ENCODE measurements at regions of chr20 and their contacts with region 1.

Region 1: DNA sequence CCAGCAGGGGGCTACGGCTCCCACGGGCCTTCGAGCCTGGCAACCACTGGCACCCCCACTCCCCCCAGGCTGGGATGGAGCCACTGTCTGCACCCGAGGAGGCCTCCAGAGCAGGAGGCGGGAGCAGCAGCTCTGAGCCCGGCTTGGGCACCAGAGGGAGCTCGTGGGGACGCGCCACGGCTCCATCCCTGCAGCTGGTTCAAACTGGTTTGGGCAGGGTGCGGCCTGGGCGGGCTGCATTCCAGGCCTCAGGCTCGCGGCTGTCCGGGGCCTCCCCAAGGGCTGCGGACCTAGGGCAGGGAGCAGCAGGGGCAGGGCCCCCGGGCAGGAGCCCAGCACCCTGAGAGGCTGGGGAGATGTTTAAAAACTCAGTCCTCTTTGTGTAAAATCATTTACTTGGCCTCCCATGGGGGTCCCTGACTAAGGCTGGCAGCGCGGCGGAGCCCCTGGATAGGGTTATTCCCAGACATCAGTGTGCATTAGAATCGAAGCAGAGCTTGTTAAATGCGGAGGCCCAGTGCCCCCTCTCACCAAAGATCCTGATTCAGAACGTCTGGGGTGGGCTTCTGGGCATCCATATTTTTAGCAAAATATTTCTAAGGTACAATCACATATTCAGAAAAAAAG is 4.1 kb upstream of the BCAS4 start:
- DNase-seq: peak; percentile 51
- ATAC-seq: peak; percentile 83
- H3K4me3 ChIP-seq: no peak overlapping the region; the same call in 1 of the 2 replicates
- H3K27ac ChIP-seq: peak overlapping the region; percentile 65
- H3K4me1 ChIP-seq: peaks cover 10% of the 10 kb centered on the region
- H3K27me3 ChIP-seq: no peaks in the 10 kb centered on the region
- CTCF ChIP-seq: peak; percentile 81 to 95 (median 90)
- EP300 ChIP-seq: no peak
- POLR2A ChIP-seq: peak; percentile 94
- RAD21 ChIP-seq: peak; percentile 51

Region 2: GRCh38 chr20:50776122-50776817 is 14.5 kb before region 1 on chr20:
- CTCF ChIA-PET with region 1: interaction called, 10 read pairs
- POLR2A ChIA-PET with region 1: interaction called, 3 read pairs
- RAD21 ChIA-PET with region 1: interaction called, 3 read pairs
- SMC1A ChIA-PET with region 1: interaction called, 4 read pairs
- in situ Hi-C with region 1: no loop called
- intact Hi-C with region 1: no loop called
- DNase-seq: no peak
- ATAC-seq: no peak
- H3K4me3 ChIP-seq: no peak overlapping the region
- H3K27ac ChIP-seq: no peak overlapping the region
- H3K4me1 ChIP-seq: no peaks in the 10 kb centered on the region
- H3K27me3 ChIP-seq: no peaks in the 10 kb centered on the region; a peak in 1 of 4 replicates
- CTCF ChIP-seq: no peak
- EP300 ChIP-seq: no peak
- POLR2A ChIP-seq: no peak
- RAD21 ChIP-seq: no peak

Region 3: DNA sequence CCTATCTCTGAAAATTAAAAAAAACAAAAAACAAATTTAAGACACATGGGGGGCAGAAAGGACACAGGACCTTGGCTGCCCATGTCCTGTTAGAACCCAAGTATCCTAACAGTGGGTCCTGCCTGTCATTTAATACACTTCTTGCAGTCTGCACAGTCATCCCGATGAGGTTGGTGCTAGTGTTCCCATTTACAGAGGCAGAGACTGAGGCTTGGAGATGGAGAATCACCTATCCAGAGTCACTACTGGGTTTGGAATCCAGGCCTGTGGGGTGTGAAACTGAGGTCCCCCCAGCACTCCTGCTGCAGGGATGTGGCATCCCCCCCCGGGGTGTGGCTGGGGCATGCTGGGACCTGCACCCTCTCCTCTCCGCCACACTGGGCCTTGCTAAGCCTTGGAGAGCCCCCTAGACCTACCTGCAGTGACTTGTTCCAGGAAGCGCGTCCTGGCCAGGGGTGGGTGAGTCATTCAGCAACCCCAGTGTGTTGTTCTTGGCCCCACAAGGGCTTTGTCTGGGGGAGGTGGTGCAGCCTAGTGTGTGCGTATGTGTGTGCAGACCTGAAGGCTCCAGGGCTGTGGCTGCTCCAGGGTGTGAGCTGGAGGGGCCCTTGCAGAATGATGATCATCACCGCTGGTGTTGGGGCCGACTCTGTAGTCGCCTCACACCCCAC is 53.8 kb after region 1 on chr20:
- CTCF ChIA-PET with region 1: interaction called, 12 read pairs
- POLR2A ChIA-PET with region 1: interaction called, 8 read pairs
- RAD21 ChIA-PET with region 1: interaction called, 9 read pairs
- SMC1A ChIA-PET with region 1: interaction called, 12 read pairs
- in situ Hi-C with region 1: no loop called
- intact Hi-C with region 1: loop called (anchors 2 kb)
- DNase-seq: peak; percentile 83
- ATAC-seq: peak; percentile 96
- H3K4me3 ChIP-seq: no peak overlapping the region; the same call in 1 of the 2 replicates
- H3K27ac ChIP-seq: peak overlapping the region; percentile 96
- H3K4me1 ChIP-seq: peaks cover 50% of the 10 kb centered on the region
- H3K27me3 ChIP-seq: no peaks in the 10 kb centered on the region
- CTCF ChIP-seq: peak in 1 of 3 experiments; percentile 6; a peak in 1 of 6 replicates
- EP300 ChIP-seq: peak; percentile 76 to 83; a peak in 3 of 4 replicates
- POLR2A ChIP-seq: peak; percentile 73
- RAD21 ChIP-seq: peak; percentile 33

Region 4: DNA sequence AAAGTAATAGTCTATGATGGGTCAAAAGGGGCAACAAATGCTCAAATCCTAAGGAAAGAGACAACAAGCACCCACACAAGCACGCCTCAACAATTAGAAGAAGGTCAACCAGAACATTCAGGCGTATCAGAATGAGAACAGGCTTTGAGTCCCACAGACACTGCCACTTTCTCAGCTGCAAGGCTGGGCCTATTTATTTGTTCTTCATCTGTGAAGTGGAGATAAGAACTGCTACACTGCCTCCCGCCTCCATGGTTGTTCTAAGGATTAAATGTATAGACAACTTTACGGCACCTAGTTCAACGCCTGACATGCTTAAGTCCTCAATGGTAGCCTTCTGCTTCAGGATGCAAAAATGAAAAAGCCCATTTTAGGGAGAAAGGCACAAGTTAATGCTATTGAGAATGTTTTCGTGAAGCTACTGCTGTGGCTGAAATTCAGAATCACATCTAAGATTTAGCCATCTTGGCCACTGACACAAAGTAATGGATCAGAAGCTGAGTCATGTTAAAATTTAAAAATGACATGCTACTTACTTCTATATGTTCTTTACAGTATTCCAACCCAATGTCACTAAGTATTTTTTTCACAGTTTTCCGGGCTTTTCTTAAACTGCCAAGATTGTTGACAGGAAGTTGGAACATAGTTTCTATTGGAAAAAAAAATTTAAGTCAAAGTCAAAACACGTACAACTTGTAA is 112.7 kb after region 1 on chr20:
- CTCF ChIA-PET with region 1: interaction called, 22 read pairs
- POLR2A ChIA-PET with region 1: interaction called, 11 read pairs
- RAD21 ChIA-PET with region 1: interaction called, 5 read pairs
- SMC1A ChIA-PET with region 1: interaction called, 3 read pairs
- in situ Hi-C with region 1: no loop called
- intact Hi-C with region 1: no loop called
- DNase-seq: no peak
- ATAC-seq: no peak
- H3K4me3 ChIP-seq: no peak overlapping the region
- H3K27ac ChIP-seq: no peak overlapping the region
- H3K4me1 ChIP-seq: no peaks in the 10 kb centered on the region
- H3K27me3 ChIP-seq: no peaks in the 10 kb centered on the region
- CTCF ChIP-seq: no peak
- EP300 ChIP-seq: no peak
- POLR2A ChIP-seq: no peak
- RAD21 ChIP-seq: no peak

Region 5: DNA sequence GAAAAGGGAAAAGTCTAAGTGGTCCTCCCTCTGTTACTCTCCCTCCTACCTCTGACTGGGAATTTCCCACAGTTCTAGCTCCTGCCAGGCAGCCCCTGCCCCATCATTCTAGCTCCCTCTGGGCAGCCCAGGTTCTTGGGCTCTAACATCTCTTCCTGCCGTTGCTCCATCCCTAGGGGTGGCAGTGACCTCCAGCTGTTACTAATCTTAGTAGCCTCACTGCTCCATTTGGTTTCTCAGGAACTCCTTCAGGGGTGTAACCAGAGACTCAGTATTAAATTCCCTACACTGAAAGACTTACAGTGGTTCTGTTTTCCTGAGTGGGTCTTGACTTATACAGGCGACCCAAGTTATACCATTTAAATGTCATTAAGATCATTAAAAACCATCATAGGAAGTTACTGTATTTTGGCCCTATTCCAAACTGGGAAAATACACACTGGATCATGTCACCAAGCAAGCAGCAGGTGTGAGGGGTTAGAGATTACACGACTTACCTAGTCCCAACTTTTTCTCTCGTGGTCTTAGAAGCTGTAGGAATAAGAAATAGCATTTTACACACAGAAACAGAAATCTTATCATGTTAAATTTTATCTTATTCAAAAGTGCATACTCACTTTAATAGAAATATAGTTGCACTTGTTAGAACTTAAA is 157.5 kb after region 1 on chr20:
- CTCF ChIA-PET with region 1: interaction called, 8 read pairs
- POLR2A ChIA-PET with region 1: no interaction called
- RAD21 ChIA-PET with region 1: interaction called, 10 read pairs
- SMC1A ChIA-PET with region 1: interaction called, 4 read pairs
- in situ Hi-C with region 1: no loop called
- intact Hi-C with region 1: no loop called
- DNase-seq: no peak
- ATAC-seq: no peak
- H3K4me3 ChIP-seq: no peak overlapping the region
- H3K27ac ChIP-seq: no peak overlapping the region
- H3K4me1 ChIP-seq: no peaks in the 10 kb centered on the region
- H3K27me3 ChIP-seq: no peaks in the 10 kb centered on the region
- CTCF ChIP-seq: no peak
- EP300 ChIP-seq: no peak
- POLR2A ChIP-seq: no peak
- RAD21 ChIP-seq: no peak

Region 6: DNA sequence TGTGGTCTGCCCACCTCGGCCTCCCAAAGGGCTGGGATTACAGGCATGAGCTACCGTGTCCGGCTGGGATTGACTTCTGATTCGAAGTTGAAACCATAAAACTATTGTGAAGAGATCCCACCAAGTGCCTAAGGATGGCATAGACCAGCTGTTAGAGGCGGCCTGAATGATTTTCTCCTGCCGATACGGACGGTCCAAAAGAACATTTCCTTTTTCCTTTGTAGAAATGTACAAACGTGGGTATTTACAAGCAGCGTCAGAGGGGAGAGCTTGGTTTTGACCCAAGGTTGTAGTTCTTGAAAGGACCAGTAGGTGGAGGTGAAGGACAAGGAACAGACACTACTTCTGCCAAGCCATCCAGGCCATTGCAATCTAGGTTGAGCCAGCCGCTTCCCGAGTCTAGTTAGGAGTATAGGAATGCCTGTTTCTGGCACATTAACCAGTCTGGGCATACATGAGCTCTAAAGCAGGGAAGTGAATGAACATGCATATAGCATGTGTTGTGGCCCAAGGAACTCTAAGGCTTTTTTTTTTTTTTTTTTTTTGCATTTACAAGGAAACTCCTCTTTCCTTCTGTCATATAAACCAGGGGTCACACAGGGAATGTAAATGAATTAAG is 196.9 kb after region 1 on chr20:
- CTCF ChIA-PET with region 1: interaction called, 68 read pairs
- POLR2A ChIA-PET with region 1: no interaction called
- RAD21 ChIA-PET with region 1: interaction called, 28 read pairs
- SMC1A ChIA-PET with region 1: interaction called, 12 read pairs
- in situ Hi-C with region 1: no loop called
- intact Hi-C with region 1: loop called (anchors 5 kb)
- DNase-seq: peak; percentile 16
- ATAC-seq: peak; percentile 96
- H3K4me3 ChIP-seq: no peak overlapping the region
- H3K27ac ChIP-seq: no peak overlapping the region
- H3K4me1 ChIP-seq: no peaks in the 10 kb centered on the region
- H3K27me3 ChIP-seq: no peaks in the 10 kb centered on the region; a peak in 1 of 4 replicates
- CTCF ChIP-seq: peak; percentile 81 to 91 (median 82)
- EP300 ChIP-seq: no peak
- POLR2A ChIP-seq: no peak
- RAD21 ChIP-seq: peak; percentile 82